ENCODE measurements at regions of chr11 and their contacts with region 1.

Region 1: GRCh38 chr11:64778508-64779346 is at the start of gene SF1:
- DNase-seq: peak; percentile 98

Region 2: DNA sequence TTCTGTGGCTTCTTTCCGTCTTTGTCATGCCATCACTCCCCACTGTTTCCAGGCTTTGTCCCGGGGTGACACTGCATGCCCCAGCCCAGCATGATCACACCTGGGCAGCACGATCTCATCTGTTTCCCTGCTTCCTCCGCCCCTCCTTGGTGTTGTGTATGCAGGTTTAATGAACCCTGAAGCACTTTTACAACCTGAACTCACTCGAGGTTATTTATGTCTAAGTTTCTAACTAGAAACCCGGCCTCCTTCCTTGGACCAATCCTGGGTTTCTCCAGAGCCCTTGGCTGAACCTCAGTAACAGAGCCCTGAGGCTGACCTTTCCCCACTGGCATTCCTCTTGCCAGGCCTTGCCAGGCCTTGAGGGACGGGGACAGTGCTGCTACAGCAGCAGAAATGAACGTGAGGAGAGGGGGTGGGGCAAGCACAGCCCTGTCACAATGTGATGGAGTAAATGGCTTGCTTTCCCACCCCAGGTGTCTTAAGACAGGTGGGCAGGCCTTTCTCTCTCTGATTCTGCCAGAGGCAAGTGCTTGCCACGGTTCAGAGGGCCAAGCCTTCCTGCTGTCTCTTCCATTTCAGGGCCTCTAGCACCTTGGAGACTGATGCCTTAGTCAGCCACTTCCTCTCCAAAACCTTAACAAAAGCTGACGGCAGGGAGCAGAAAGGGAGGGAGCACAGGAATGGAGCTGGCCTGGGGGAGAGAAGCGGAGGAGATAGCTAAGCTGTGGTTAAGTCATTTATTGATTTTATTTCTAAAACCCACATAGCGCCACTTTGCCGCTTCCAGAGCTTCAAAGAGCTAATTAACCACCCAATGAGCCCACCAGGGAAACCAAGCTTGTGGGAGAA is 15.8 kb before region 1 on chr11:
- CTCF ChIA-PET with region 1: interaction called, 4 read pairs
- POLR2A ChIA-PET with region 1: interaction called, 11 read pairs
- DNase-seq: no peak

Region 3: GRCh38 chr11:64799623-64800302 is 21.0 kb after region 1 on chr11:
- CTCF ChIA-PET with region 1: no interaction called
- POLR2A ChIA-PET with region 1: interaction called, 17 read pairs
- DNase-seq: no peak

Region 4: GRCh38 chr11:64810271-64810890 is 31.7 kb after region 1 on chr11 and contains the start of gene MEN1:
- CTCF ChIA-PET with region 1: no interaction called
- POLR2A ChIA-PET with region 1: interaction called, 13 read pairs
- DNase-seq: peak; percentile 95

Region 5: GRCh38 chr11:64823568-64824133 is 44.9 kb after region 1 on chr11:
- CTCF ChIA-PET with region 1: no interaction called
- POLR2A ChIA-PET with region 1: no interaction called
- DNase-seq: no peak